GM18951 (cell line): ENCODE measurements at regions of chr3 and their contacts with region 1.

Region 1: DNA sequence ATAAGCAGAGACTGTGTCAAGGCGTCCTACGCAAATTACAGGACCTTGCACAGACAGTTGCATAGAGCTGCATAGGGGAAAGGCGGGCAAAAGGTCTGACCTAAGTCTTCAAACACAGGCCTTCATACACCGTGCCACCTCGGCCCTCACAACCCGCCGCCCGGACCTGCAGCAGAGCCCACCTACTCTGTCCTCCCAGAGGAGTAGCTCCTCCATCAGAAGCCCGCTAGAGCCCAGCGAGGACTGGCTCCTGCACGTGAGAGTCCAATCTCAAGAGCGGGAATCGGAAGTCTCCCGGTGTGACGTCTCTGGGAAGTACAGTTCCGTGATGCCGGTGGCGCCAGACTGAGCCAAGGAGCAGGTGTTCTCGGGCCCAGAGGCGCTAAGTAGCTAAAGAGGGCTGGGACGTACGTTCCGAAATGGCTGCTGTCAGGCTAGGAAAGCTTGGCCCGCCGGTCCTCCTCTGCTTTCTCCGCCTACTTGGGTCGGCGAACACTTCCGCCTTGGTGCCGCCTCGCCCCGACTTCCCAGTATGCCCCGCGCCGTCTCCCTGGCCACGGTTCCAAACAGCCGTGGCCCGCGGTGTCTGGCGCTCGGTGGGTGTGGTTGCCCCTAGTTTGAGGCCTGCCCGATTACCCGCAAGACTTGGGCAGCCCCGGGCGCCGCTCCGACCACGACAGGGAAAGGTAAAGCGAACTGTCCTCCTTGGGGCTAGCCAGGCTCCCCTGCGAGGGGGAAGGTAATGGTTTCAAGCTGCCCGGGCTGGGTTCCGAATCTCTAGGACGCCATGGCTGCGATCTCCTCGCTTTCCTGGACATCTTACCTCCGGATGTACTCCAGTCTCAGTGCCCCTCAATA is at the starts of genes ASTE1 and NEK11:
- POLR2A ChIP-seq: peak; percentile 81

Region 2: DNA sequence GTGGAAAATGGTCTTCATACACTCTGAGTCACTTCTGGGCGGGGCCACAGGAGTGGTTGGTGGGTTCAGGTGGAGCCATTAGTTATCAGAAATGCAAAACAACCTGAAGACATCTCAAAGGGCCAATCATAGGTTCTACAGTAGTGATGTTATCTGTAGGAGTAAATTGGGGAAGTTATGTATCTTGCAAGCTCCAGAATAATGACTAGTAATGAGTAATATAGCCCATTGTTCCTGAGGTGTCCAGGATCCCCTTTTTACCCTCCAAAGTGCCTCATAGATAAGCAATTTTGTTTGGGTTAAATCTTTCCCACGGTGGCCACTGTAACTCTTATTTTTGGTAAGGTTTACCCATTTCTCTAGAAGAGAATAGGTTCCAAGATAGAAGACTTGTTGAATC is 371.6 kb before region 1 on chr3:
- in situ Hi-C with region 1: no loop called
- POLR2A ChIP-seq: no peak

Region 3: DNA sequence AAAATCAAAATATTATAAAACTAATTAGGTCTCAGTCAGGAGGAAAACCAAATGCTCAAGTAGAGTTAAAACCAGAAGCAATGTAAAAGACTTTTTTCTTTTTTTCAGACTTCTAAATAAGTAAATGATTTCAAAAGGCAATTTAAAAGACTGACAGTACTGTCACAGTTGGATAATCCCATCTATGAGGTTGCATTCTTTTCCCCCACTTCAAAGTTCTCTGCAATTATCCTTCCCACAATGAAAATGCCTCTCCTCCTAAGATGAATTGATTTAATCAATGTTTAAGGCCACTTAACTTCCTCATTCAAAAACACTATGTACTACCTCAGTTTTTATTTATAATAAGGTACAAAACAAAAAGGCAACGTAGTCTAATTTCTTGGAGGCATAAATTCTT is 468.2 kb after region 1 on chr3:
- in situ Hi-C with region 1: loop called (anchors 25 kb)
- POLR2A ChIP-seq: no peak

Region 4: DNA sequence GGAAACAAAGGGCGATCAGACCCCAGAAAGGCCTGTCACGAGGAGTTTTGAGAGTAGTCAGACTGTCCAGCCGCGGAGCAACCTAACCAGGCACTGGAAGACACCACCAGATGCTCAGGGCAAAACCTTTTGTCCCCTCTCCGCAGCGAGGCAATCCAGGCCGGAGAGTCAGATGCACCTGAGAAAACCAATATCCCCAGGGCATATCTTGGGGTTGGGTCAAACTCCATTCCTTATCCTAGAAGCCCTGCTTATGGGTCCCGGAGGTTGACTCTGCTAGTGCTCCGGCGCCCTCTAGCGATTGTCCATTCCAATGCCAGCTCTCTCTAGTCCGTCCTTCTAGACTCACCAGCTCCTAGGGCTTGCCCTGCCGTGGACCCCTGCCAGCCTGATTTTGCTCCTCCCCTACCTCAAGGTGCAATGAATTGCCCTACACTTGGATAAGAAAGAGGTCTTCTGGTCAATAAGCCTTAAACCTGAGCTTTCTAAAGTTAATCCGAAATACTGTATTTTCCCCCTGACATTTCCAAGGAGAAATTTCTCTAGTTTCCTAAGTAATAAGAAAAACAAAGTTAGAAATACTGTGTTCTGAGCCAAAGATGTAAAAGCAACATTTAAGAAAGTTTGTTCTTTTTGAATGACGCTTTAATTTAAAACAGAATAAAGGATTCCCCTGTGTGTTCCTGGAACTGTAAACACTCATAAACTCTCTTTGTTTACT is 1002.8 kb after region 1 on chr3:
- in situ Hi-C with region 1: loop called (anchors 25 kb)
- POLR2A ChIP-seq: no peak

Region 5: GRCh38 chr3:132117642-132118041 is 1091.1 kb after region 1 on chr3:
- in situ Hi-C with region 1: no loop called
- POLR2A ChIP-seq: no peak

Region 6: DNA sequence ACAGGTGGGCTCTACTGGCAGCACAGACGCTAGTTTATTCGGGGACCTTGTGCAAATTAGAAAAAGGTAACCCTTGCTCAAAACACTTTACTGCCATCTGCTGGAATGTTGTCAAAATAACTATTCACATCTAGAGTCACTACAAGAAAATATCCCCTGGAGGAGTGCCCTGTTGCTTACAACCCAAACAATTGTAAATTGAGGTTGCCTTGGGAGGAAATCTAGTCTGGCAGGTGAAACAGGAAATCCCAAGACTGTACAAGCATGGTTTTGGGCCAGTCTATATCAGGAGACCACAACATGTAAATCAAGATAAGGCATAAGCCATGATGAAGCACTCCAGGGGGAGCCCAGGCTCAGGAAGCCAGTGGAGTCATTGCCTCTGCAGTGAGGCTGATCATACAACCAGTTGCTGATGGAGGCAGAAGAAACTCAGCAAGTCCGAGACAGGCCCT is 1153.8 kb after region 1 on chr3:
- in situ Hi-C with region 1: loop called (anchors 25 kb)
- POLR2A ChIP-seq: no peak